Body of pancreas (tissue), 4 donors: ENCODE measurements at regions of chr3 and their contacts with region 1.

Region 1: DNA sequence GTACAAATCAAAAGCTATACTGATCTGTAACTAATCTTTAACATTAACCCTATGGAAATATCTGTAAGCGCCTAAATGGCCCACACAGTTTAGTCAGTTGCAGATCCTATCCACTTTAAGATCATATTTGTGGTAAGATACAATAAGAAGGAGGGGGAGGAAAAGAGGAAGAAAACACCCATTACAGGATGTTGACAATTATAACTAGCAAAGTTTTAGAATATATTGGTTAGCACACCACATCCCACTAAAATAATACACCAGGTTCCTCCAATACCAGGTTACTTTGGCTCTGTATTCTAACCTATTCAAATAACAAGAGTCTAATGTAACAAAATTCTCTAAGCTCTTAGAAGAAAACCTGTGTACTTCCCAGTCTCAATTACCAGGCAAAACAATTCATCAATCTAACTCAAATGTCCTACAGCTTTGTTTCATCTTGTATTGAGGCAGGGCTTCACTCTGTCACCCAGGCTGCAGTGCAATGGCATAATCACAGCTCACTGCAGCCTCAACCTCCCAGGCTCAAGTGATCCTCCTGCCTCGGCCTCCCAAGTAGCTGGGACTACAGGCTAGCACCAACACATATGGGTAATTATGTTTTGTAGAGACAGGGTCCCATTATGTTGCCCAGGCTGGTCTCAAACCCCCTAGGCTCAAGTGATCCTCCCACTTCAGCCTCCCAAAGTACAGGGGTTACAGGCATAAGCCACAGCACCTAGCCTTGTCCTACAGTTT is 4.2 kb downstream of the SLC4A7 start:
- DNase-seq: no peak
- ATAC-seq: no peak
- H3K4me3 ChIP-seq: no peak overlapping the region
- H3K27ac ChIP-seq: no peak overlapping the region
- H3K4me1 ChIP-seq: peaks cover 4% of the 10 kb centered on the region
- H3K27me3 ChIP-seq: no peaks in the 10 kb centered on the region
- CTCF ChIP-seq: no peak
- POLR2A ChIP-seq: no peak

Region 2: DNA sequence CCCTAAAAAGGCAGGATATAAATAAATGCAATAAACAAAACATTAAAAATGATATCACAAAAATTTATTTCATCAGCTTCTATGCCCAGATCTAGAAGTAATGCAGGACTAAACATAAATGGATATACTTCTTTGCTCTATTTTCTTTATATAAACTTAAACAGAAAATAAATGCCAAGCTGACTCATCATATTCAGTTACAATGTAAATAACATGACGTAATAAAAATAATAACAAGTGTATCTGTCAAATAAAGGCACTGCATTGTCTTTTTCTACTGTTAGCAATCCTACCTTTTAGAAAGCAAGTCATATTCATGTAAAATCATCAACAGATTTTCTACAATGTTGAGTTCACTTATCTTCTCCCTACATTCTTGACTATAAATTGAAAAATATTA is 172.4 kb before region 1 on chr3:
- intact Hi-C with region 1: loop called (anchors 10 kb)
- DNase-seq: no peak
- ATAC-seq: no peak
- H3K4me3 ChIP-seq: no peak overlapping the region
- H3K27ac ChIP-seq: no peak overlapping the region
- H3K4me1 ChIP-seq: no peaks in the 10 kb centered on the region
- H3K27me3 ChIP-seq: no peaks in the 10 kb centered on the region
- CTCF ChIP-seq: no peak
- POLR2A ChIP-seq: no peak

Region 3: GRCh38 chr3:27559835-27560234 is 79.9 kb after region 1 on chr3:
- intact Hi-C with region 1: no loop called
- DNase-seq: peak in 3 of 4 donors; percentile 9 to 26 (median 11)
- ATAC-seq: peak; percentile 12
- H3K4me3 ChIP-seq: no peak overlapping the region
- H3K27ac ChIP-seq: no peak overlapping the region
- H3K4me1 ChIP-seq: no peaks in the 10 kb centered on the region
- H3K27me3 ChIP-seq: no peaks in the 10 kb centered on the region
- CTCF ChIP-seq: no peak
- POLR2A ChIP-seq: no peak